ENCODE measurements at regions of chr21 and their contacts with region 1.

Region 1: GRCh38 chr21:25449950-25450349 is 157.3 kb downstream of the MRPL39 start:
- DNase-seq: no peak
- ATAC-seq: no peak

Region 2: DNA sequence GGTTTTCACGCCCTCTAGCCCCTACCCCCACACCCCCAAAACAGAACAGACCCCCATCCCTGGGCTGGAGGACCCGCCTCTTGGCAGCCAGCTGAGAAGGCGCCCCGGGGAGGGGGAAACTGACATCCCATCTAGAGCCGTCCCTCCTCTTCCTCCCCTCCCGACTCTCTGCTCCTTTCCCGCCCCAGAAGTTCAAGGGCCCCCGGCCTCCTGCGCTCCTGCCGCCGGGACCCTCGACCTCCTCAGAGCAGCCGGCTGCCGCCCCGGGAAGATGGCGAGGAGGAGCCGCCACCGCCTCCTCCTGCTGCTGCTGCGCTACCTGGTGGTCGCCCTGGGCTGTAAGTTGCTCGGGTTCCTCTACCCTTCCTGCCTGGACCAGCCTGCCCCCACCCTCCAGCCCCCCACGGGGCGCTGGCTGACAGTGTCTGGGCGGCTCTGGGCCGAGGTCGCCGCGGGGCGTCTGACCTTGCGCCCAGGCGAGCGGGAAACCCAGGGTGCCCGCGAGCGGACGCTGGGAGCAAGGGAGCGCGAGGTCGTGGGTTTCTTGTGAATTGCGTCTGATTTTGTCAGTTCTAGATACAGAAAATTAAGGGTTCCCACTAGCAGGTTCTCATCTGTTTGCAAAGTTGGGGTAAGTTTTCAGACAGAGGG is 189.7 kb after region 1 on chr21:
- intact Hi-C with region 1: no loop called
- DNase-seq: peak; percentile 76
- ATAC-seq: peak; percentile 84

Region 3: GRCh38 chr21:26177187-26177586 is 727.2 kb after region 1 on chr21:
- intact Hi-C with region 1: loop called (anchors 5 kb)
- DNase-seq: no peak
- ATAC-seq: peak; percentile 13